B cell (primary cell): ENCODE measurements at regions of chr4 and their contacts with region 1.

Region 1: DNA sequence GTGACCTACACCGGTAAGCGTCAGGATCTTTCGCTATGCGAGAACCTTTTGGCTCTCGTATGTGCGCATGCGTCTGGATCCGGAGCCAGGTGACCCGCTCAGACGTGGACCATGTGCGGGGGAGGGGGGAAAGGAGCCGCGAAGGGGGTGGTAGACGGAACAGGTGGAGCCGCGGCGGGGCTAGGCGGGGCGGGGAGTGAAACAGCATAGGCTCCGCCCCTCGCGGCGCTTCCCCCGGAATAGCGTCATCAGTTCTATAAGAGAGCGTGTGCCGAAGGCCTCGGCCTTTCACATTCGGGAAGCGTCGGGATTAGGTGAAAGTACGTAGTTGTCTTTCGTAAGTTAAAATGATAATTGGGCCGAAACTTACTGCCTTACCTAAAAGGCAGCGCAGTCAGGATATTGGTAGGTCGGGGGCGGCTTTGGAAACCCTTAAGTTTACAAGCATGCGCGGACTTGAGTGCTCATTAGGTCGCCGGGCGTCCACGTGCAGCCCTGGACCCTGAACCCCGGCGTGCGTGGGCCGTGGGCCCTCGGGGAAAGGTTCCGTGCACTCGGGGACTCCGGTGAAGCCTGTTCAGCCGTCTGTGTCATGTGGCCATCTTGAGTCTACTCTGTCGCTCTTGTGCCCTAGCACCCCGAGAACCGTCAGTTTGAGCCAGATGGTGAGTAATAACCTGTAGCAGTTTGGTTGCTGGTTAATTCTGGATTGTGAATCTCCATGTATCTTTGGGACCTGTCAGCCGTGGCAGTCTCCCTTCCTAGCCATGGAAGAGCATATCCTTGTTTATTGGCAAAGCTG is 74.1 kb downstream of the PRSS12 start:
- DNase-seq: peak; percentile 99
- ATAC-seq: peak; percentile 99
- H3K4me3 ChIP-seq: peak overlapping the region; percentile 81 to 95 (median 90)
- H3K4me3 Mint-ChIP-seq: peak overlapping the region; percentile 95
- H3K27ac ChIP-seq: peak overlapping the region; percentile 95 to 96
- H3K27ac Mint-ChIP-seq: peak overlapping the region; percentile 91
- H3K4me1 ChIP-seq: peaks cover 25 to 28% of the 10 kb centered on the region in 2 donors
- H3K4me1 Mint-ChIP-seq: peaks cover 43% of the 10 kb centered on the region
- H3K27me3 ChIP-seq: no peaks in the 10 kb centered on the region
- H3K27me3 Mint-ChIP-seq: no peaks in the 10 kb centered on the region
- CTCF ChIP-seq: no peak

Region 2: DNA sequence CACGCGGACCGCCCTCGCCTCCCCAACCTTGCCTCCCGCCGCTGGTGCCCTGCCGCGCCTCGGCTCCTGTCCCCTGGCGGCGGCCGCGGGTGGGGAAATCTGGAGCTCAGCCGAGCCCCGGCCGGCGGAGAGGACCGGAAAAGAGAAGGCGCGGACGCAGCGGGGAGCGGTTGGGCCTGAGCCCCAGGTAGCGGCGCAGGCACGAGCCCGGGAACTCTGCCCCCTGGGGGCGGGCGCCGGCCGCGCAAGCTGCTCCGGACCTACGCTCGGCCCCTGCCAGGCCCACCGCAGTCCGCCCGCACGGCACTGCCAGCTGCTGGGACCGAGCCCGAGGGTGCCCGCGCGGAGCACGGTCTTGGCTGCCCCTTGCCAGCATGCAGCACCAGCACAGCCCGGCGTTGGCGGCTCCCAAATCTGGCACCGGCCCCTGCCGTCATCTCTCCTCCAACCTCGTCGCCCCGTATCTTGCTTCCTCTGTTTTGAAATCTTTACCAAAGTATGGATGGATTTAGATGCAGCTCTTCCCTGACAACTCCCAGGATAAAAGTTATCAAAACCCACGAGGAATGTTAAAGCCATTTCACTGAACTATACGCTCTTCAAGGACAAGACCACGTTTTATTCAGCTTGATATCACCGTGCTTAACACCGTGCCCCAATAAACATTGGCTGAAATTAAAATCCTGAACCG is 74.3 kb after region 1 on chr4 and contains the start of gene PRSS12:
- CTCF ChIA-PET with region 1: no interaction called
- POLR2A ChIA-PET with region 1: no interaction called
- intact Hi-C with region 1: loop called (anchors 1 kb)
- DNase-seq: peak; percentile 63
- ATAC-seq: peak; percentile 85
- H3K4me3 ChIP-seq: peak within 1 kb of the TSS in 3 of 5 experiments; percentile 9 to 52 (median 39)
- H3K4me3 Mint-ChIP-seq: peak within 1 kb of the TSS; percentile 81
- H3K27ac ChIP-seq: no peak within 1 kb of the TSS
- H3K27ac Mint-ChIP-seq: no peak within 1 kb of the TSS
- H3K4me1 ChIP-seq: peaks cover 8 to 19% of the 10 kb centered on the region in 2 donors
- H3K4me1 Mint-ChIP-seq: peaks cover 16% of the 10 kb centered on the region
- H3K27me3 ChIP-seq: peaks cover 0 to 57% (median 30%) of the 10 kb centered on the region in 4 experiments
- H3K27me3 Mint-ChIP-seq: peaks cover 68% of the 10 kb centered on the region
- CTCF ChIP-seq: peak; percentile 76
- total RNA-seq, gene PRSS12: not detected in 2 replicates

Region 3: DNA sequence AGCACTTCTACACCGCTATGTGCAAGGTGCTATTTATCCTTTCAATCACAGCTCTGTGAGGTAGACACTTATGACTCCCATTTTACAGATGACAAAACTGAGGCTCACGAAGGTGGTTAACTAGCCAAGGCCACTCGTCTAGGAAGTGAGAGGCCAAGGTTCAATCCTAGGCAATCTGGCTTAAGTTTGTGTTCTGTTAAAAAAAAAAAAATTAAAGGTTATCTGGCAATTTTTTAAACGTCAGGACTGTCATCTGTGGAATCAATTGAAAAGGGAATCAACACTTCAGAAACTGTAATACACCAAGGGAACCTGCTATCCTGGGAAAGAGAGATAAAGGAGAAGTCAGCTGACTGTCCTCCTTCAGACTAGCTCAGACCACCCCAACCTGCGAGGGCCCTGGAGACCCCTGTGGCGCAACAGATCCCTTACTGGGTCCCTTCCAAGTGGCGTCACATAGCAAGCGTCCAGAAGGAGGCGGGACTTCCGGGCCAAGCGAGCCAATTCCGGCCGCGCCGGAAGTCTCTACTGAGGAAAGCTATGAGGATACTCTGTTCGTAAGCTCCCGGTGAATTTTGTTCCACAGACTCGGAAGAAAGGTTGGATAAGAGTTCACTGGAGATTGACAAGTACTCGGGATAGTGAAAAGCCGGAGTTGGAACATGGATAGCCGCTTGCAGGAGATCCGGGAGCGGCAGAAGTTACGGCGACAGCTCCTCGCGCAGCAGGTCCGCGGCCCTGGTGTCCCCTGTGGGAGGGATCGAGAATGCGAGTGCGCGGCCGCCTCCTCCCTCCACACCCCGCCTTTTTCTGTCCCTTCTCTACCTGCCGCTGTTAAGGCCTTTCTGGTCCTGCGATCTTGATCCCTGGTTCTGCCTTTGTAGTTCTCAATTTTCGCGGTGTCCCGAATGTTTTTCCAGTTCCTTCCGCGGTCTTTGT is 406.5 kb after region 1 on chr4 and contains the start of gene METTL14:
- CTCF ChIA-PET with region 1: interaction called, 3 read pairs
- POLR2A ChIA-PET with region 1: no interaction called
- intact Hi-C with region 1: loop called (anchors 1 kb)
- DNase-seq: peak; percentile 93
- ATAC-seq: peak; percentile 96
- H3K4me3 ChIP-seq: peak within 1 kb of the TSS; percentile 63 to 94 (median 83)
- H3K4me3 Mint-ChIP-seq: peak within 1 kb of the TSS; percentile 95
- H3K27ac ChIP-seq: peak within 1 kb of the TSS; percentile 71 to 86
- H3K27ac Mint-ChIP-seq: peak within 1 kb of the TSS; percentile 93
- H3K4me1 ChIP-seq: peaks cover 11 to 16% of the 10 kb centered on the region in 2 donors
- H3K4me1 Mint-ChIP-seq: peaks cover 21% of the 10 kb centered on the region
- H3K27me3 ChIP-seq: no peaks in the 10 kb centered on the region
- H3K27me3 Mint-ChIP-seq: no peaks in the 10 kb centered on the region
- CTCF ChIP-seq: no peak
- total RNA-seq, gene METTL14: 65.6 and 74.8 TPM in 2 replicates

Region 4: DNA sequence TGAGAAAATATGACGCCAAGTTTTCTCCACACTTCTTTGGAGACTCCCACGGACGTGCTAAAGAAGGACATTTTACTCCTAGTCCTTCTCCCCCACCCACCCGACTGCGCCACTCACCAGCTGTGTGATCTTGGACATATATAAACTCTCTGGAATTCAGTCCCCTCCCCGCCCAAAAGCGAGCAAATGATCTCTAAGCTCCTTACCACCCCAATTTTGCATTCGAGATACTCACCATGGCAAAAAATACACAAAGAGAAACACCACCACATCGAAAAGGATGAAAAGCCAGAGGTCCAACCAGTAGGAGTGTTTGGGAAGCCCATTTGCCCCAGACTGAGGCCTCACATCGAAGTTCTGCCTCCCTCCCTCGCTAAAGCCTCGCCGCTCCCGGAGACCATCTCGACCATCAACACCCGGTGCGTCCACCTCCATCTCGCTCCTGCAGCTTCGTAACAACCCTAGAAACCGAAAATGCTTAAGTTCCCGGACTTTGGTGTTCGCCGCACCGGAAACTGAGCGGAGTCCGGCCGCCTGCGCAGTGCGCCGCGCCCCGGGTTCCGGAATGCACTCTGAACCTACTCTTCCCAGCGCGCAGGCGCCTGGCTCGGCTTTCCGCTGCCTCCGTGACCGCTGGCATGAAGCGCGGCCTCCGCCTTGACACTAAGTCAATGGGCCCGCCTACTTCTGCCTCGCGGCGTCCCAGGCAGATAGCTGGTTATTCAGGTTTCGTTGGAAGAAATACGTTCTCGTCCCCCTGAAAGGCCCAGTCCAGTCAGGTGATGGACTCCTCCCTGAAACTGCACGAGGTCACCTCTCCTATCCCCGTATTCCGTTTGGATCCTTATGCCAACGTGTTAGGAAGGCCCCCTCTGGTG is 1021.7 kb after region 1 on chr4:
- CTCF ChIA-PET with region 1: no interaction called
- POLR2A ChIA-PET with region 1: no interaction called
- intact Hi-C with region 1: loop called (anchors 10 kb)
- DNase-seq: peak; percentile 95
- ATAC-seq: peak; percentile 93
- H3K4me3 ChIP-seq: peak overlapping the region; percentile 87 to 97 (median 94)
- H3K4me3 Mint-ChIP-seq: peak overlapping the region; percentile 92
- H3K27ac ChIP-seq: peak overlapping the region; percentile 91 to 92
- H3K27ac Mint-ChIP-seq: peak overlapping the region; percentile 95
- H3K4me1 ChIP-seq: peaks cover 17 to 21% of the 10 kb centered on the region in 2 donors
- H3K4me1 Mint-ChIP-seq: peaks cover 30% of the 10 kb centered on the region
- H3K27me3 ChIP-seq: no peaks in the 10 kb centered on the region
- H3K27me3 Mint-ChIP-seq: peaks cover 5% of the 10 kb centered on the region
- CTCF ChIP-seq: no peak